Activated T-helper 2 cell treated with anti-CD3 and anti-CD28 coated beads, Interferon-gamma antibody, Interleukin-2, Interleukin-4, amounts not matched to agents 10 μg/mL and 5 μg/mL and 100 μg/mL, durations not matched to agents 14 hours and 24 hours and 36 hours (primary cell): ENCODE measurements at regions of chr14 and their contacts with region 1.

Region 1: GRCh38 chr14:59507063-59507780 is 22.9 kb downstream of the JKAMP start:
- DNase-seq: peak; percentile 33
- H3K4me3 Mint-ChIP-seq: no peak overlapping the region
- H3K27ac Mint-ChIP-seq: no peak overlapping the region
- H3K4me1 Mint-ChIP-seq: peaks cover 4% of the 10 kb centered on the region
- H3K27me3 Mint-ChIP-seq: peaks cover 9% of the 10 kb centered on the region

Region 2: DNA sequence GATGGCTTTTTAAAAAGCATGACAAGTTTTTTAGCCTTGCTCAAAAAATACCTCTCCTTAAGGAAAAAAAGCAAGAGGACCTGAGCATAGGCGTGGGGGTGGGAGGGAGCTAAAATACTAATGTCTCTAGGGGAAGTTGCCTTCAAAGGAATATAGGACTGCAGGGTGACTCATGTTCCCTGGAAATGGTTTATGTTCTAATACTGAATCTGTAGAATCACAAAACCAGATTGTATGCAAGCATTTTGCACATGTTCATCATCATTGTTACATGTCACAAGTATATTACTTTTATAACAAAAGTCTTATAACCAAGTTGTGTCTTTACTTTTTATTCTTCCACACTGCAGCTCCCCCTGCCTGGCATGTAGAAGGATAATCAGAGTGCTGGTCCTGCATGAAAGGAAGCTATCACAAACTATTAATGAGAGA is 78.6 kb before region 1 on chr14:
- intact Hi-C with region 1: no loop called
- DNase-seq: no peak
- H3K4me3 Mint-ChIP-seq: no peak overlapping the region
- H3K27ac Mint-ChIP-seq: no peak overlapping the region
- H3K4me1 Mint-ChIP-seq: peaks cover 8% of the 10 kb centered on the region
- H3K27me3 Mint-ChIP-seq: peaks cover 8% of the 10 kb centered on the region

Region 3: GRCh38 chr14:59576332-59577294 is 69.4 kb after region 1 on chr14 and contains the start of gene CCDC175:
- intact Hi-C with region 1: loop called (anchors 1 kb)
- DNase-seq: peak; percentile 71
- H3K4me3 Mint-ChIP-seq: peak within 1 kb of the TSS; percentile 70
- H3K27ac Mint-ChIP-seq: no peak within 1 kb of the TSS
- H3K4me1 Mint-ChIP-seq: peaks cover 7% of the 10 kb centered on the region
- H3K27me3 Mint-ChIP-seq: peaks cover 23% of the 10 kb centered on the region
- total RNA-seq, gene CCDC175: not detected in 2 replicates